PC-3 (cell line): ENCODE measurements at regions of chr9 and their contacts with region 1.

Region 1: DNA sequence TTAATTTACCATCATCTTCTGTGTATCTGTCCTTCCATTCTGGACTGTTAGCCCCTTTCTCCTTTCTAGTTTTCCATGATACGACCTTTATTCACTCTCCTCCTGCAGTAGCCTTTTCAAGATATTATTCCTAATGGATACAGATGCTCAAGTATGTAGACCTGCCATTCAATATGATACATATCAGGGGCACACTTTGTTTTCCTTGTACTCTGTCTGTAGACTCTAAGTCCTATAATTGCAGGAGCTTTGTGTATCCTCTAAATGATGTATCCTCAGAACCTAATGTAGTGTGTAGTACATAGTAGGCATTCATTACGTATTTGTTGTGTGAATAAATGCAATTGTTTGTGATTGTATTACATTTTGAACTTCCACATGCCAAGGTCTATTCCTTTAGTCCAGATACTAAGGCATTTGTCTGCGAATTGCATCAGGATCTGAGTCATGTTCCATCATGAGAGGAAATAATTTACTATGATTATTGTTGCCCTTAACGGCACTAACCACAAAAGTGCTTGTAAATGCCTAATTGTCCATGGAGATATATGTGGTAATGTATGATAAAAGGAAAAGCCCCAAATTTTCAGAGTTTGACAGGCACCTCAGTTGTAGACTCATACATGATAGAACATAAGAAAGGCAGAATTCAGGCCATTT is 57.1 kb upstream of the IZUMO3 start:
- DNase-seq: peak; percentile 39
- ATAC-seq: peak; percentile 91
- H3K4me3 ChIP-seq: no peak overlapping the region
- H3K27ac ChIP-seq: no peak overlapping the region
- H3K4me1 ChIP-seq: no peaks in the 10 kb centered on the region
- H3K27me3 ChIP-seq: no peaks in the 10 kb centered on the region
- CTCF ChIP-seq: no peak

Region 2: GRCh38 chr9:24413651-24414050 is 189.2 kb before region 1 on chr9:
- CTCF ChIA-PET with region 1: no interaction called
- POLR2A ChIA-PET with region 1: no interaction called
- intact Hi-C with region 1: loop called (anchors 5 kb)
- DNase-seq: peak; percentile 56
- ATAC-seq: peak; percentile 74
- H3K4me3 ChIP-seq: no peak overlapping the region
- H3K27ac ChIP-seq: 0 out of 2 replicates have a peak overlapping the region, but pooled peaks have one; percentile 2
- H3K4me1 ChIP-seq: peaks cover 3% of the 10 kb centered on the region; the same call in 1 of the 2 replicates
- H3K27me3 ChIP-seq: no peaks in the 10 kb centered on the region
- CTCF ChIP-seq: no peak

Region 3: GRCh38 chr9:24561957-24562356 is 40.9 kb before region 1 on chr9:
- CTCF ChIA-PET with region 1: no interaction called
- POLR2A ChIA-PET with region 1: no interaction called
- intact Hi-C with region 1: no loop called
- DNase-seq: no peak
- ATAC-seq: no peak
- H3K4me3 ChIP-seq: no peak overlapping the region
- H3K27ac ChIP-seq: no peak overlapping the region
- H3K4me1 ChIP-seq: no peaks in the 10 kb centered on the region
- H3K27me3 ChIP-seq: no peaks in the 10 kb centered on the region
- CTCF ChIP-seq: no peak

Region 4: DNA sequence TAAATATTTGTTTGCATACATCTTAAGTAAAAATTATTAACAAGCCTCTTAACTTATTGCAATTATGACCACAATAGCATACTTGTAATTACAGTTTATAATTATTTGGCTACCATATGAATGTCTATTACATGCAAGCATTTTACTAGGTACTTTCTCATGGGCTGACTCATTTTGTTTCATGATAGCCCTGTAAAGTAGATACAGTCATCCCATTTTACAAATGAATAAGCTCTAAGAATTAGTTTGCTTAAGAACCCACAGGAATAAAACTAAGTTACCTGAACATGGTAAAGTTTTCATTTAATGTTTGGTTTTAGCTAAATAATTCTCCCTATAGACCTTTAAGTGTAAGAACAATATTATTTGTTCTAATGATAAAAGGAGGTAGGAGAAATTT is 69.5 kb after region 1 on chr9:
- CTCF ChIA-PET with region 1: no interaction called
- POLR2A ChIA-PET with region 1: interaction called, 11 read pairs
- intact Hi-C with region 1: no loop called
- DNase-seq: peak; percentile 21
- ATAC-seq: peak; percentile 96
- H3K4me3 ChIP-seq: no peak overlapping the region
- H3K27ac ChIP-seq: peak overlapping the region; percentile 59
- H3K4me1 ChIP-seq: no peaks in the 10 kb centered on the region
- H3K27me3 ChIP-seq: no peaks in the 10 kb centered on the region
- CTCF ChIP-seq: no peak